ENCODE measurements at regions of chr1 and their contacts with region 1.

Region 1: DNA sequence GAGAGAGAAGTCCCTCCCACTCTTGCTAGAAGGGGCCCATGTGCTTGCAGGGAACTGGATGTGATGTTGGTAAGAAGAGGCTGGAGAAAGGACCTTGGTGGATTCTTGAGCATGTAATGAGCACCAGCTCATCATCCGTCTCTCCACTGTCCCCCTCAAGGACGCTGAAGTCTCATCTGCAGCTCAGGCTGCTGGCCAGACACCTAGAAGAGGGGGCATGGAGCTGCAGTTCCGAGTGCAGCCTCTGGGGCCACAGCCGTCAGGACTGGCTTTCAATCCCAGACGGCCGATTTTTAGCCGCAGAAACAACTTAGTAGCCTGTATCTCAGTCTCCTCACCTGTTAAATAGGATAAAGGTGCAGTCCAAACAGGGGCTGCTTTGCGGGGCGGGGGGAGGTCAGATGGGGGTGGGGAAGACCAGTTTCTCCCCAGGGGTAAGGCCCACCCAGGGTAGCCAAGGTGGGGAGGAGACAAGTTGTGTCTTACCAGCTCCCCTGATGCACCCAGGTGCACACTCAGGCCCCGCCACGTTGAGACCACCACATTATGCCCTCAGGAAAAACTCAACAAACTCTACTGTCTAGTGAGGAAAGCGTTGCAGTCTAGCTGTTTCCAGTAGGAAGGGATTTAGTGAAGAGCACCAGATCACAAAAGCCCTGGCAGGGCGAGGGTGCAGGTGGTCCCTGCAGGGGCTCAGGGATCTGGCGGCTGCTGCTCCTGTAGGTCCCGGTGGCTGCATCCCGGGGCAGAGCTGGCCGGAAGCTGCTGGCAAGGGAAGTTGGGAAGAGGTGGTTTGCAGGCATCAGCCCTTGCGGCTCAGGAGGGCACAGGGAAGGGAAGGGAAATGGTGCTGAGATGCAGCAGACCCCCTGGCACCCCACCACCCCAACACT is 29.5 kb downstream of the LDLRAP1 start:
- DNase-seq: peak in 4 of 5 donors; percentile 27 to 68 (median 46)
- H3K4me3 ChIP-seq: no peak overlapping the region
- H3K4me3 Mint-ChIP-seq: peak overlapping the region in 2 of 7 donors; percentile 24 to 27
- H3K27ac ChIP-seq: no peak overlapping the region
- H3K27ac Mint-ChIP-seq: peak overlapping the region in 4 of 8 donors; percentile 22 to 79 (median 54)
- H3K4me1 ChIP-seq: peaks cover 42% of the 10 kb centered on the region
- H3K4me1 Mint-ChIP-seq: peaks cover 19 to 63% (median 21%) of the 10 kb centered on the region in 3 donors
- H3K27me3 ChIP-seq: no peaks in the 10 kb centered on the region
- H3K27me3 Mint-ChIP-seq: no peaks in the 10 kb centered on the region

Region 2: DNA sequence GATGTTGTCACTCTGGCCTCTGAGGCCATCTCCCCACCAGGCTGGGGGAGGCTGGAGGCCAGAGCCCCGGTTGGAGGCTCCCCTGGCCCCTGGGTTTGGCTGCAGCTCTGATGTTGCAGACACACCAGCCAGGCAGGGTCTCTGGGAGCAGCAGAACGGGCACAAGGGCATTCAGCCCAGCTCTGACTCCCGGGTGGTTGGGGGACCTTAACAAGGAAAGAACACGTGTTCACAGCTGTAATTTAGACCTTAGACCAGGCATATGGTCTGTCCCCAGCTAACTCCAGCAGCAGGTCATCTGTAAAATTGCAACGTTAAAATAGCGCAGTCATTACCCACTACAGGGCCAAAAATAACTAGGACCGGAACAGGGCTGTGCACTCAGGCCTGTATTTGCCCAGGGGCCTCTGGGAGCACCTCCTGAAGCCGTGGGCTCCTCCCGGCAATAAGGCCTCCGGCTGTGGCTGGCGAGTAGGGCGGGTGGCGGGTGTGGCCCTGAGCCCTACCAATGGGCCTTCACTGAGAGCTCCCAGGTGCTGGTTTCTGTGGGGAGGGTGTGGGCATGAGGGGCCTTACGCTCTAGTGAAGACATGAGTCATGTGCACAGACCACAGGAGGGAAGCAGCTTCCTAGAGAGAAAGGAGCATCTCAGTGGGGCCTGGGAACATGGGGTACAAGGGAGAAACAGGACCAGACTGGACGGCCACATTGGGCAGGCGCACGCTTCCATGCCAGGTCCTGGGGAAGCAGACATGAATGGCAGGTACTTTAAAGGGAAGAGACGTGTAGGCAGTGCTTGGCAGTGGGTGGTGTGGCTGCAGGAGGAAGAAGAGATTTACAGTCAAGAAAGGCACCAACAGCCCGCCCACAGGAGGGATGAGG is 23.4 kb before region 1 on chr1:
- CTCF ChIA-PET with region 1: interaction called, 23 read pairs
- POLR2A ChIA-PET with region 1: interaction called, 9 read pairs
- DNase-seq: peak; percentile 57 to 87 (median 72)
- H3K4me3 ChIP-seq: peak overlapping the region; percentile 68
- H3K4me3 Mint-ChIP-seq: peak overlapping the region; percentile 3 to 92 (median 78)
- H3K27ac ChIP-seq: peak overlapping the region; percentile 53
- H3K27ac Mint-ChIP-seq: peak overlapping the region; percentile 53 to 99 (median 96)
- H3K4me1 ChIP-seq: peaks cover 95% of the 10 kb centered on the region
- H3K4me1 Mint-ChIP-seq: peaks cover 91 to 98% (median 95%) of the 10 kb centered on the region in 3 donors
- H3K27me3 ChIP-seq: no peaks in the 10 kb centered on the region
- H3K27me3 Mint-ChIP-seq: no peaks in the 10 kb centered on the region

Region 3: GRCh38 chr1:25556791-25557476 is 16.0 kb before region 1 on chr1:
- CTCF ChIA-PET with region 1: interaction called, 13 read pairs
- POLR2A ChIA-PET with region 1: interaction called, 4 read pairs
- DNase-seq: peak in 3 of 5 donors; percentile 49 to 69 (median 65)
- H3K4me3 ChIP-seq: peak overlapping the region; percentile 29
- H3K4me3 Mint-ChIP-seq: peak overlapping the region in 6 of 7 donors; percentile 39 to 81 (median 59)
- H3K27ac ChIP-seq: peak overlapping the region; percentile 11
- H3K27ac Mint-ChIP-seq: peak overlapping the region; percentile 73 to 96 (median 88)
- H3K4me1 ChIP-seq: peaks cover 100% of the 10 kb centered on the region
- H3K4me1 Mint-ChIP-seq: peaks cover 91 to 100% (median 97%) of the 10 kb centered on the region in 3 donors
- H3K27me3 ChIP-seq: no peaks in the 10 kb centered on the region
- H3K27me3 Mint-ChIP-seq: no peaks in the 10 kb centered on the region

Region 4: GRCh38 chr1:25743826-25744581 is 171.1 kb after region 1 on chr1:
- CTCF ChIA-PET with region 1: no interaction called
- POLR2A ChIA-PET with region 1: no interaction called
- DNase-seq: no peak
- H3K4me3 ChIP-seq: no peak overlapping the region
- H3K4me3 Mint-ChIP-seq: no peak overlapping the region
- H3K27ac ChIP-seq: no peak overlapping the region
- H3K27ac Mint-ChIP-seq: no peak overlapping the region
- H3K4me1 ChIP-seq: no peaks in the 10 kb centered on the region
- H3K4me1 Mint-ChIP-seq: peaks cover 0 to 16% (median 0%) of the 10 kb centered on the region in 3 donors
- H3K27me3 ChIP-seq: no peaks in the 10 kb centered on the region
- H3K27me3 Mint-ChIP-seq: no peaks in the 10 kb centered on the region

Measured in CD8-positive, alpha-beta memory T cell (primary cell).